A549 (cell line): ENCODE measurements at regions of chr3 and their contacts with region 1.

Region 1: GRCh38 chr3:114310695-114311094 is 16.9 kb downstream of the TIGIT start:
- DNase-seq: no peak
- ATAC-seq: peak in 1 of 2 experiments; percentile 37; a peak in 1 of 6 replicates
- H3K4me3 ChIP-seq: no peak overlapping the region
- H3K27ac ChIP-seq: no peak overlapping the region
- H3K4me1 ChIP-seq: no peaks in the 10 kb centered on the region
- CTCF ChIP-seq: no peak
- EP300 ChIP-seq: no peak
- POLR2A ChIP-seq: no peak
- RAD21 ChIP-seq: no peak

Region 2: GRCh38 chr3:114299421-114299820 is 11.3 kb before region 1 on chr3:
- CTCF ChIA-PET with region 1: interaction called, 11 read pairs
- POLR2A ChIA-PET with region 1: no interaction called
- DNase-seq: peak; percentile 58 to 79
- ATAC-seq: peak; percentile 95 to 99
- H3K4me3 ChIP-seq: 0 out of 3 replicates have a peak overlapping the region, but pooled peaks have one; percentile 8
- H3K27ac ChIP-seq: 0 out of 6 replicates have a peak overlapping the region, but pooled peaks of 1 of the 2 experiments have one; percentile 40
- H3K4me1 ChIP-seq: no peaks in the 10 kb centered on the region
- CTCF ChIP-seq: peak; percentile 58
- EP300 ChIP-seq: no peak
- POLR2A ChIP-seq: no peak
- RAD21 ChIP-seq: peak; percentile 48; a peak in 3 of 5 replicates